K562 (cell line): ENCODE measurements at regions of chr3 and their contacts with region 1.

Region 1: DNA sequence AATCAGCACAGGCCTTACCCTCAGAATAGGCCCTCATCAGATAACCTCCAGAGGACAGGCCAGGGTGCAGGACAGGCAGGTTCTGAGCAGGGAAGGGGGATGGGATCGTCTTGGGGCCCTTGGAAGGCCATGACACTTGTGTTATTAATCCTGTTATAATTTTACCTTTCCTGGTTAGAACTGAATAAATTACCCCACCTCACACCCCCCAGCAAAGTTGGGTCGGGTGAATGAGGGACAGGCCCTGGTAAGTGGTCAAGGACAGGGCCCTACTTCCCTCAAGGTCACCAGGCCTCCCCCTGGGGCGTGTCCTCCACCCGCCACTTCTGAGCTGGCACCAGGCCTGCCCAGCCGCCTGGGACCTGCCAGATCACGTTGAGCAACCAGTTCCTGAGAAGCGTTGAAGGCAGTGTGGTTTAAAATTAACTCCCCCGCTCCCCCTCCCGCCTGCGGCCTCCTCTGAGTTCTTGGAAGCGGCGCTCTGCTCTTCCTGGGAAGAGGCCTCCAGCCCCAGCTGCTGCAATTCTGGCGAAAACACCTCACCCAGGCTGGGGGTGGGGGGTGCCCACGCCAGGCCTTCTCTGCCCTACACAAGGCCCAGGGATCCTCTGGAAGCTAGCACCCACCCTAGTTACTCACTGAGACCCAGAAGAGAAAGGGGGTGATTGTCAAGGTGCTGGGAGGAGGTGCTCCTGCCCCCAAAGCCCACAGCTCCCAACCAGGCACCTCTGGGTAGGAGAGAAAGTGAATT is 10.6 kb downstream of the CISH start:
- DNase-seq: peak; percentile 66 to 94 (median 75)
- ATAC-seq: peak; percentile 72
- H3K4me3 ChIP-seq: no peak overlapping the region; the same call in 1 of the 2 replicates
- H3K27ac ChIP-seq: peak overlapping the region; percentile 96
- H3K4me1 ChIP-seq: peaks cover 58 to 74% of the 10 kb centered on the region in 2 experiments
- H3K27me3 ChIP-seq: no peaks in the 10 kb centered on the region
- CTCF ChIP-seq: no peak
- EP300 ChIP-seq: peak; percentile 86
- POLR2A ChIP-seq: no peak
- RAD21 ChIP-seq: peak in 1 of 2 experiments; percentile 9; a peak in 1 of 4 replicates

Region 2: DNA sequence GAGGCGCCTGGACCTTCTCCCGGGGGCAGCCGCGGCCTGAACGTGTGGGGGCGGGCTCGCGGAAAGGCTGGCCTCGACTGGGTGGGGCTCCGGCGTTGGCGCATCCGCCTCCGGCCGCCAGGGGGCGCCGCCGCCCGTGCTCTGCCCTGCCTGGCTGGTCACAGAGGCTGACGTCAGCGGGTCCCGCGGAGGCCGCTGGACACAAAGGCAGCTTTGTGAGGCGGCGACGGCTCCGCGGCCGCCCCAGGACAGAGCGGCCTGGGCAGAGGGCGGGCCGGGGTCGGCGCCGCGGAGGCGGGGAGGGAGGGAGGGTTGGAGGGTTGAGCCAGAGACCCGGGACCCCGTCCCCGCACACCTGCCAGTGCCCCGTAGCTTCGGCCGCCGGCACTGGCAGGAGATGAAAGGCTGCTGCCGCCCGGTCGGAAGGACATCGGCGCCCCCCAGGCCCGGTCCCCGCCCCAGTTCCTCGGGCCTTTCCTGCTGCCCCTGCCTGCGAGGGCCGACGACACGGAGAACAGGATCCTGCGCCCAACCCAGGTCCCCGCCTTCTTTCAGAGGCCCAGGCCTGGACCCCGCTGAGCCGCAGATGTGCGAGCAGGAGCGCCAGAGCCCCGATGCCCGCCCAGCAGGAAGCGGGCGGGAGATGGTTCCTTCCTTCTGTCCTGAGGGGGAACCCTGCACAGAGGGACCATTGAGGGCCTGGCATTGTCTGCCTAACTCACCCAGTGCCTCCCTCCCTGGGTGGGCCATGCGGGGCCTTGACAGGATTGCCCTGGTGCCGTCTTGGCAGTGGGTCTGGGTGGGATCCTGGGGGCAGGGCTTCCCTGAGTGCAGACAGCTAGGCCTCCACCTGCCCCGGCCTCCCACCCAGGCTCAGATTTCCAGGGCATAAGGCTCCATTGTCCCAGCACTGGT is 340.7 kb before region 1 on chr3:
- CTCF ChIA-PET with region 1: no interaction called
- POLR2A ChIA-PET with region 1: no interaction called
- in situ Hi-C with region 1: no loop called
- intact Hi-C with region 1: no loop called
- DNase-seq: peak; percentile 90 to 92 (median 91)
- ATAC-seq: peak; percentile 97
- H3K4me3 ChIP-seq: peak overlapping the region; percentile 58
- H3K27ac ChIP-seq: peak overlapping the region; percentile 84
- H3K4me1 ChIP-seq: peaks cover 6 to 37% of the 10 kb centered on the region in 2 experiments; a peak in 4 of 5 replicates
- H3K27me3 ChIP-seq: no peaks in the 10 kb centered on the region
- CTCF ChIP-seq: peak; percentile 77 to 93 (median 91)
- EP300 ChIP-seq: no peak
- POLR2A ChIP-seq: peak; percentile 39; the same call in 1 of the 2 replicates
- RAD21 ChIP-seq: peak; percentile 54 to 61; a peak in 3 of 4 replicates

Region 3: GRCh38 chr3:50568947-50569749 is 31.9 kb before region 1 on chr3 and contains the start of gene HEMK1:
- CTCF ChIA-PET with region 1: no interaction called
- POLR2A ChIA-PET with region 1: interaction called, 12 read pairs
- in situ Hi-C with region 1: no loop called
- intact Hi-C with region 1: no loop called
- DNase-seq: peak; percentile 95 to 98 (median 97)
- ATAC-seq: peak; percentile 90
- H3K4me3 ChIP-seq: peak within 1 kb of the TSS; percentile 90
- H3K27ac ChIP-seq: peak within 1 kb of the TSS; percentile 80
- H3K4me1 ChIP-seq: peaks cover 36 to 42% of the 10 kb centered on the region in 2 experiments; a peak in 4 of 5 replicates
- H3K27me3 ChIP-seq: no peaks in the 10 kb centered on the region
- CTCF ChIP-seq: no peak
- EP300 ChIP-seq: no peak
- POLR2A ChIP-seq: peak; percentile 57
- RAD21 ChIP-seq: no peak
- polyA plus RNA-seq, gene HEMK1: 2.0 to 5.2 TPM

Region 4: DNA sequence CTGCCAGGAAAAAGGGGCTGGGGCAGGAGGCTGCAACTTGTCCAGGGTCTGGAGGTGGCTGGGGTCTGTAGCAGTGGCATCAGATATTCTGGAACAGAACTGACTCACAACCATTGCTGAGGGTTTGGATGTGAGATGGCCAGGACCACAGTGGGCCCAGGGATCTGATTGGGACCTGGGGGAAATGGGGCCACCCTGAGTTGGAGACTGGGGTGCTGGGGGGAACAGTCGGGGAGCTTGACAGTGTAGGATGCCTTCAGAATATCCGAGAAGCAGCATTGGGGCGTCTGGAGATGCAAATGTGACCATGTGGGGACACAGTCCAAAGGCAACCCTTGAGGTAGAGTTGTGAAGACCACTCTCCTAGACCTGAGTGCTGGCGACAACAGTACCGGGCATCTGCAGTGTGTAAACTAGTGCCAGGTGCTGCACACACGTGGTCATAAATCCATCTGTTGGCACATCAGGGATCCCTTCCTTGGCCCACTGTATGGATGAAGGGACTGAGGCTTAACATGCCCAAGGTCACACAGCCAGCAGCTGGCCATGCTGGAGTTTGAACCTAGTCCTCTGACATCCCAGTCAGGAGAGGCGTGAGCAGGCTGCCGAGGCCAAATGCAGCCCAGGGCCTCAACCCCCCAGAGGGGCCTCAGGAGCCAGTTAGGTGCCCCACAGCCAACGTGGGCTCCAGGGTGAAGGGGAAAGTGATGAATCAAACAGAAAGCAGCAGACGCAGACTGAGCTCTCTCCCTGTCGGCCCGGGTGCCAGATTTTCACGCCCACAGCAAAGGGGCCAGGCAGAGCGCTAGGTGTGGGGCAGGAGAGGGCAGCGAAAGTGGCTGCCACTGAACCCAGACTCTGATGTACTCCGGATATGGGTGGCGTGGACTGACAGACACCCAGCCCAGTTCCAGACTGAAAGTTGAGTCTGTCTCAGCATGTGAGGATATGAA is 12.9 kb before region 1 on chr3:
- CTCF ChIA-PET with region 1: no interaction called
- POLR2A ChIA-PET with region 1: interaction called, 44 read pairs
- in situ Hi-C with region 1: no loop called
- intact Hi-C with region 1: loop called (anchors 1 kb)
- DNase-seq: no peak
- ATAC-seq: no peak
- H3K4me3 ChIP-seq: no peak overlapping the region
- H3K27ac ChIP-seq: peak overlapping the region; percentile 93
- H3K4me1 ChIP-seq: peaks cover 49 to 52% of the 10 kb centered on the region in 2 experiments
- H3K27me3 ChIP-seq: no peaks in the 10 kb centered on the region
- CTCF ChIP-seq: no peak
- EP300 ChIP-seq: no peak
- POLR2A ChIP-seq: no peak
- RAD21 ChIP-seq: no peak

Region 5: DNA sequence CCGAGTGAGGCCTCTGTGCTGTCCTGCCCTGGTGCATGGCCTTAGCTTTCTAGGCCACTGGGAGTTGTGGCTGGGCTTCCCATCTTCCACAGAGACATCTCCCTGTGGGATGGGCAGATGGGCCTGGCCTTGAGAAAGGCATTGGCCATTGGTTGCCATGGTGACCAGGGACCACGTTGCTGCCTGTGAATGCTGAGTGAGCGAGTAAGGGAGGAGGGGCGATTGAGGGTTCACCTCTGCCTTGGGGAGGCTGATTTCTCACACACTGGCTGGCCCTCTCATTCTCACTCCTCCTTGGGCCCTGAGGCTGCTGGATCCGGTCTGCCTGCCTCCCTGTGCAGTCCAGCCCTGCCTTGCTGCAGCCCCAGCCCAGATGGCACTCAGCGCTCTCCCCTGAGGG is 47.3 kb after region 1 on chr3:
- CTCF ChIA-PET with region 1: no interaction called
- POLR2A ChIA-PET with region 1: no interaction called
- in situ Hi-C with region 1: no loop called
- intact Hi-C with region 1: no loop called
- DNase-seq: peak in 3 of 4 experiments; percentile 18 to 23 (median 23)
- ATAC-seq: peak; percentile 32; the same call in 2 of the 3 replicates
- H3K4me3 ChIP-seq: no peak overlapping the region
- H3K27ac ChIP-seq: no peak overlapping the region
- H3K4me1 ChIP-seq: peaks cover 0 to 4% of the 10 kb centered on the region in 2 experiments; a peak in 2 of 5 replicates
- H3K27me3 ChIP-seq: no peaks in the 10 kb centered on the region
- CTCF ChIP-seq: no peak
- EP300 ChIP-seq: no peak
- POLR2A ChIP-seq: no peak
- RAD21 ChIP-seq: no peak